Dorsolateral prefrontal cortex (tissue), 120 donors: ENCODE measurements at regions of chr2 and their contacts with region 1.

Region 1: GRCh38 chr2:216023055-216023648 is 9.8 kb upstream of the MREG start:
- DNase-seq: peak in 2 of 10 donors; percentile 31 to 43
- H3K4me3 ChIP-seq: no peak overlapping the region
- H3K27ac ChIP-seq: no peak overlapping the region
- H3K27me3 ChIP-seq: no peaks in the 10 kb centered on the region
- CTCF ChIP-seq: peak; percentile 26 to 69 (median 55)

Region 2: DNA sequence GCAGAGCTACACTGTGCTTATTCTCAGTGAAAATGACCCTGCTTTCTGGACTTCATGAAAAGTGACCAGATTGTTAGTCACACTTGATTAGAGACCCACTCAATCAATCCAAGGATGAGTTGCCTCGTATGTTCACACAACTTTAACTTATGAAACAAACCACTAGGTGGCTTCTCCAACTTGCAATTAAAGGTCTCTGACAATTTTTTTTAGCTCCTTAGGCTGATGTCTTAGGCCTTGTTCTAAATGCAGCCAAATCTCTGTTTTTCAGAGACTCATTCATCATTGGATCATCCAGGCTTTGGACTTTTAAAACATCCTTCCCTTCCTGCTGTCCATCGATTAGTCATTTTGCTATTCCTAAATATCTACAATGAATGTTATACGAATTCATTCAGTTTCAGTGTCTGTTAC is 73.2 kb before region 1 on chr2:
- intact Hi-C with region 1: loop called in 1 of 2 experiments (anchors 5 kb)
- DNase-seq: no peak
- H3K4me3 ChIP-seq: no peak overlapping the region
- H3K27ac ChIP-seq: no peak overlapping the region
- H3K27me3 ChIP-seq: no peaks in the 10 kb centered on the region
- CTCF ChIP-seq: peak; percentile 14 to 71 (median 52)